Ovary (tissue), 10 donors: ENCODE measurements at regions of chr5 and their contacts with region 1.

Region 1: DNA sequence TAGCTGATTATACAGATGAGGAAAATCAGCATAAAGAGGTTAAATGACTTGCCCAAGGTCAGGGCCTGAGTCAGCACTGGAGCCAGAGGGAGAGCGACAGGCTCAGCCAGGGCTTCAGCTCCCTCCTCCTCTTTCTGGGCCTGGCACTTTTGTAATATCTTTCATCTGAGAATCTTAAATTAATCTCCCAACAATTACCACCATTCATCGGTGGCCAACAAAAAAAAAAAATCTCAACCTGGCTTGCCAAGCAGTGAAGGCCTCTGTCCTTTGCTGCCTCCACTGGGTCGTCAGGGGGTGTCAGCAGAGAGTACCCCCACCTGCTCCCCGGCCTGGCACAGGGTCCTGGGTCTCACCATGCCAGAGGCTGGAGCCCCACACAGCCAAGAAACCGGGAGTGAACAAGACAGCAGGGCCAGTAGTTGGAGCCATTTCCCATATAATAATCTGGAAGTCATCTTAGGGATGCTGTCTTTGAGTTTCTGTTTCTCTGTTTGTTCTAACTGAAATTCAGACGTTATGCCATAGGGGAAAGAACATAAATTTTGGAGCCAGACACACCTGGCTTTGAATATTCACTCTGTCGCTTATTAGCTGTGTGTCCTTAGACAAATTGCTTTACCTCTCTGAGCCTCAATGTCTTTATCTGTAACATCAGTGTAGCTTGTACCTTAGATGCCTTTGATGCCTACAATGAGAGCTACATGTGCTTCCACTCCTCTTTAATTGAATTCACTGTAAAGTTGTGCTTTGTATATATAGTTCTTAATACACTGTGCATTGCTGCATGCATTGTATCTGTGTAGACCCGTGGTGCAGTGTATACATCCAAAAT is 299.9 kb upstream of the MSX2 start:
- DNase-seq: no peak
- H3K4me3 ChIP-seq: no peak overlapping the region
- H3K27ac ChIP-seq: no peak overlapping the region
- H3K4me1 ChIP-seq: no peaks in the 10 kb centered on the region
- H3K27me3 ChIP-seq: no peaks in the 10 kb centered on the region
- CTCF ChIP-seq: no peak
- EP300 ChIP-seq: no peak
- POLR2A ChIP-seq: no peak

Region 2: GRCh38 chr5:174338185-174339010 is 86.0 kb before region 1 on chr5:
- intact Hi-C with region 1: no loop called
- DNase-seq: no peak
- H3K4me3 ChIP-seq: no peak overlapping the region
- H3K27ac ChIP-seq: no peak overlapping the region
- H3K4me1 ChIP-seq: no peaks in the 10 kb centered on the region
- H3K27me3 ChIP-seq: no peaks in the 10 kb centered on the region
- CTCF ChIP-seq: no peak
- EP300 ChIP-seq: no peak
- POLR2A ChIP-seq: no peak

Region 3: DNA sequence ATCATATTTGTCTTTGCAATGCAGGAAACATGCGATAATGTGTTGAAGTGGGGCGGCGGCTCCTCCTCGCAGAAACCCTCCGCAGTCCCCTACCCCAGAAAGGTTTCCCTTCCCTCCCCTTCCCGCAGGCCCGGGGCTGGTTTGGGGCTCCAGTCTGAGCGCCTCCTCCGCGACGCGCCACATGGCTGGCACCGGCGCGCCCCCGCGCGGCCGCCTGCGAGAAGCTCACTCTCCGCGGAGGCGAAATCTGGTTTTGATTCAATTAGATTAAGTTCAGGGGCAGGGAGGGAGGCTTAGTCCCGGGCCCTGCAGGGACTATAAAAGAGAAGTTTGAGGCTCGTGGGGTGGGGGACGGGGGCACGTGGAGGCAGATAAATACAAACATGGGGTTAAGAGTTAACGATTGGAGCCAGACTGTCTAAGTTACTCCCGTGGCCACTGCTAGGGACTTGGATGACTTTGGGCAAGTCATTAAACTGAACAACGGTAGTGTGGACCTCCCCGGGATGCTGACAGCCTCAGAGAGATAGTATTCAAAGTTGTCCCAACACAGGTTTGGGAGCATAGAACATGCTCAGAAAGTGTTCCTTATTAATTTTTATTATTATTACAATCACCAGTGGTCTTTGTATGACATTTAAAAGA is 369.4 kb after region 1 on chr5:
- intact Hi-C with region 1: loop called in 1 of 4 experiments (anchors 10 kb)
- DNase-seq: peak in 3 of 5 donors; percentile 15 to 49 (median 26)
- H3K4me3 ChIP-seq: no peak overlapping the region
- H3K27ac ChIP-seq: no peak overlapping the region
- H3K4me1 ChIP-seq: no peaks in the 10 kb centered on the region
- H3K27me3 ChIP-seq: no peaks in the 10 kb centered on the region
- CTCF ChIP-seq: no peak
- EP300 ChIP-seq: no peak
- POLR2A ChIP-seq: no peak

Region 4: DNA sequence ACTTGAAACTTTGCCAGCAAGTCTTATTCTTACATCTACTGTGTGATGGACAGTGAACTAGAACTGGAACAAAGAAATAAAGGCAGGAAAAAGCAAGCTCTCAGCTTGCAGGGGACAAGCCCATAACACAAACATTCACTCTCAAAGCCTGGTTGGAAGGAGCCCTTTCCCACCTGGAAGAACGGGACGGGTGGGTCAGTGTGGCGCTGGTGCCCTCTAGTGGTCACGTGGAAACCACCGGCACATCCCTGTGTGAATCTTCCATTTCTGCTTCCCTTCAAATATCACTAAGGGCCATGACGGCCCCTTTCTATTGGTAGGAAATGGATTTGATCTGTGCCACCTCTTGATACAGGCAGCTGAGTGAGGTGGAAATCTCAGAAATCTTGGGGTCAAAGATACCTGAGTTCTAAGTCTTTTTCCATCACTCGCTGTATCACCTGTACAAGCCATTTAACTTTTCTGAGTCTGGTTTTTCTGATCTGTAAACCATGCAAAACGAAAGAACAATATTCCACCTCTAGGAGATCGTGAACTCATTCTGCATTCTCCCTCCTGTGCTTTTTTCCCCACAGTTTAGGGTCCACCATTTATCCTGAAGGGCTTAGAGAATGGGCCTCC is 511.5 kb after region 1 on chr5:
- intact Hi-C with region 1: loop called in 1 of 4 experiments (anchors 5 kb)
- DNase-seq: peak in 2 of 5 donors; percentile 20 to 40
- H3K4me3 ChIP-seq: no peak overlapping the region
- H3K27ac ChIP-seq: no peak overlapping the region
- H3K4me1 ChIP-seq: no peaks in the 10 kb centered on the region
- H3K27me3 ChIP-seq: no peaks in the 10 kb centered on the region
- CTCF ChIP-seq: peak in 1 of 3 donors; percentile 9
- EP300 ChIP-seq: no peak
- POLR2A ChIP-seq: no peak

Region 5: DNA sequence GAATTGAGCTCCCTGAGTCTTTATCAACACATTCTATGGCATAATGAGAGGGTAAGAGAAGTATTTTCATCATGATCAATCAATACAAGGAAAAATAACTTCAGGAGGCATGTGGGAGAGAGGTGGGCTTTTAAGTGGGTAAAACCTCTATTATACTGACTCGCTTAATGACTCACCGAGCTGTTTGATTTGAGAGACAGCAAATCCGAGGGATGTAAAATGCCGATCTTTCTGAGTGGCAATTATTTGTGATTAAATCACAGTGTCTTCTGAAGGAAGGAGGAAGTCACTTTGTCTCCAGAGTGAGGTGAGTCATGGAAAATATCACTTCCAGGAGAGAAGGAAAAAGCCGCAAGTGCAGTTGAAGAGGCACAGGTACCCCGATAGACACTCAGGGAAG is 699.1 kb after region 1 on chr5:
- intact Hi-C with region 1: no loop called
- DNase-seq: no peak
- H3K4me3 ChIP-seq: no peak overlapping the region
- H3K27ac ChIP-seq: no peak overlapping the region
- H3K4me1 ChIP-seq: no peaks in the 10 kb centered on the region
- H3K27me3 ChIP-seq: no peaks in the 10 kb centered on the region
- CTCF ChIP-seq: no peak
- EP300 ChIP-seq: no peak
- POLR2A ChIP-seq: no peak